BJ (cell line): ENCODE measurements at regions of chr4 and their contacts with region 1.

Region 1: DNA sequence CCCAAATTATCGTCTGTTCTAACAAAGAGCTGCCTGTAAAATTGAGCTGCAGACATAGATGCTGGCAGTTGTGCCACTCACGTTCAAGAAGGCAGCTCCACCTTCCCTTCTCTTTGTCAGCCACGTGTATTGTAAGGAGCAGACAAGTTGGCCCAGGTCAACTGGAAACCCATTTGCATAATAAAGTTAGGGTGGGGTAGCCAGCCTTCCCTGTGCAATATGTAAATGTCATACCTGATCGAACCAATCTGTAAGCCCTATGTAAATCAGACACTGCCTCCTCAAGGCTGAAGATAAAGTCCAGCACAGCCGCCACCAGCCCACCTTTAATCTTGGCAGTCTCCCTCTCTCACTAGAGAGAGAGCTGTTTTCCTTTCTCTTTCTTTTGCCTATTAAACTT is 117.2 kb downstream of the TMEM144 start:
- DNase-seq: no peak
- H3K4me3 ChIP-seq: no peak overlapping the region
- H3K27me3 ChIP-seq: no peaks in the 10 kb centered on the region
- CTCF ChIP-seq: no peak

Region 2: DNA sequence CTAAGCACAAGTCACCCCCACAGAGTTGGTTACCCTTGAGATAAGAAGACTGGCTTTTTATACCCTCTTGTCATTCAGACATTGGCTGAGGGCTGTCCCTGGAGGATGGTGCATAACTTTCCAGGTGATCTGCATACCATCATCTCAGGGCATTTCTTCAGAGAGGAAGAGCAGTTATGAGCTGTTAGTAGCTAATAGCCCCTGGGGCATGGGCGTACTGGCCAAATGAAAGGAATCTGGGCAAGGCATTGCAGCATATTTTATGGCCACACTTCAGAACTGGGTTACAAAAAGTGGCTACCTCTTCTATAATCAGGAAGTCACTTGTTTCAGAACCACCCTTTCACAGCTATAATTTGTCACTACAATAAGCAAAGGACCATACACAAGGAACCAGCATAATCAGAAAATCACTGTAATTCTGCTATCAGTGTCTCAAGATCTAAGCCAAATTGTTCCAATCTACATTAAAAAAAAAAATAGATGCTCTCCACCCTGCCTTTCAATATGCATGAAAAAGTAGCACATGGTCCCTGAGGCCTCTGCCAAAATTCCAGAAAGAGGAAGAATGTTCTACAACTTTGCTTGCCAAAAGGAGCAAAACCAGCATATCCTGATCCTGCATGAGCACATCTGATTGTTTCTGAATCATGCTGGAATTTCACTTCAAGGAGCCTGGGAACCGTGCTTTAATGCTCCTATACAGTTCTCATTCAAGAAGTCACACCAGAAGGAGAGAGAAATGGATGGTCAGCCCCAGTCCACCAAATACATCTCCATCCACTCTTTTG is 25.3 kb before region 1 on chr4:
- CTCF ChIA-PET with region 1: no interaction called
- POLR2A ChIA-PET with region 1: interaction called, 10 read pairs
- DNase-seq: peak; percentile 78
- H3K4me3 ChIP-seq: no peak overlapping the region
- H3K27me3 ChIP-seq: no peaks in the 10 kb centered on the region
- CTCF ChIP-seq: no peak

Region 3: GRCh38 chr4:158521484-158522088 is 194.1 kb after region 1 on chr4 and contains the start of gene RXFP1:
- CTCF ChIA-PET with region 1: no interaction called
- POLR2A ChIA-PET with region 1: interaction called, 10 read pairs
- DNase-seq: no peak
- H3K4me3 ChIP-seq: peak within 1 kb of the TSS; percentile 14; the same call in 1 of the 2 replicates
- H3K27me3 ChIP-seq: no peaks in the 10 kb centered on the region
- CTCF ChIP-seq: no peak
- polyA plus RNA-seq, gene RXFP1: 0.17 and 0.42 TPM in 2 replicates